Psoas muscle (tissue), 8 donors: ENCODE measurements at regions of chrX and their contacts with region 1.

Region 1: DNA sequence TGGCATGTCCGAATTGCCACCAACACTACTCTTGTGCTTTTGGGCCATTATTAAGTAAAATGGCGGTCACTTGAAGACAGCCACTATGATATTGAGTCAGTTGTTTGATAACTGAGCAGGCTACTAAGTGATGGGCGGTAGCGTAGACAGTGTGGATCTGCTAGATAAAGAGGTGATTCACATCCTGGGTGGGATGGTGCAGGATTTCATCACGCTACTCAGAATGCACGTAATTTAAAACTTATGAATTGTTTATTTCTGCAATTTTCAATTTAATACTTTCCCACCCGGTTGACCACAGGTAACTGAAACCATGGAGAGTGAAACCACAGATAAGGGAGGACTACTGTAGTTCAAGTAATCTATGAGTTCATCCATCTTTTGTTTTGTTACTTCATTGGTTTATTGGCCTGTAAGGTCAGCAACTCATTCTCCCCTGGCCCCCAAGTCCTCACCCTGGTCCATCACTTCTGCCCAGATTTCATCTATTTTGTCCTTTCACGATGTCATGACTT is 2.9 kb downstream of the ARAF start:
- DNase-seq: no peak
- ATAC-seq: no peak
- H3K4me3 ChIP-seq: no peak overlapping the region
- H3K27ac ChIP-seq: no peak overlapping the region
- H3K4me1 ChIP-seq: no peaks in the 10 kb centered on the region
- H3K27me3 ChIP-seq: no peaks in the 10 kb centered on the region
- CTCF ChIP-seq: no peak

Region 2: DNA sequence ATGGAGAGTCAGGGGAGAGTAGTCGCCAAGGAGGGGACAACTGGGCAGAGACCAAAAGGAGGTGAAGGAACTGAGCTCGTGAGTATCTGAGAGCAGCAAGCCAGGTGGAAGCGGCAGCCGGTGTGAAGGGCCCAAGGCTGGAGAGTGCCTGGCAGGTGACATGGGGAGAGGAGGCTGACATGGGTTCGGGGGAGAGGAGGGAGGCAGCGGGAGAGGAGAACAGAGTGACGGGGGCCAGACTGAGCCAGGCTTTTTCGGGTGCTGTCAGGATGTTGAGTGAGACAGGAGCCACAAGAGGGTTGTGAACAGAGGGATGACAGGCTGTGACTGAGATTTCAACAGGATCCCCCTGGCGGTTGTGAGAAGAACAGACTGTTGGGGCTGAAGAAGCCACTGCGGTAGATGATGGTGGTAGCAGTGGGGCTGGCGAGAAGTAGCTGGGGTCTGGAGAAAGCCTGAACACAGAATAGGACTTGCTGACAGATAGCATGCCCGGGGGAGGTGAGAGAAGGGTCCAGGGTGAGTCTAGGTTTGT is 80.8 kb after region 1 on chrX:
- intact Hi-C with region 1: loop called in 1 of 2 experiments (anchors 2 kb)
- DNase-seq: no peak
- ATAC-seq: peak; percentile 50 to 56 (median 53)
- H3K4me3 ChIP-seq: no peak overlapping the region
- H3K27ac ChIP-seq: no peak overlapping the region
- H3K4me1 ChIP-seq: peaks cover 4% of the 10 kb centered on the region
- H3K27me3 ChIP-seq: no peaks in the 10 kb centered on the region
- CTCF ChIP-seq: no peak